Natural killer cell (primary cell): ENCODE measurements at regions of chr12 and their contacts with region 1.

Region 1: GRCh38 chr12:44875954-44876553 is at the start of gene NELL2:
- DNase-seq: peak in 1 of 2 donors; percentile 78
- ATAC-seq: peak; percentile 60 to 69 (median 67)
- H3K4me3 ChIP-seq: peak within 1 kb of the TSS; percentile 58
- H3K4me3 Mint-ChIP-seq: peak within 1 kb of the TSS; percentile 86
- H3K27ac ChIP-seq: no peak within 1 kb of the TSS
- H3K27ac Mint-ChIP-seq: peak within 1 kb of the TSS in 1 of 2 donors; percentile 30
- H3K4me1 ChIP-seq: peaks cover 21% of the 10 kb centered on the region
- H3K4me1 Mint-ChIP-seq: peaks cover 21 to 22% of the 10 kb centered on the region in 2 donors
- H3K27me3 ChIP-seq: peaks cover 50% of the 10 kb centered on the region
- H3K27me3 Mint-ChIP-seq: peaks cover 51 to 71% of the 10 kb centered on the region in 2 donors
- CTCF ChIP-seq: no peak
- total RNA-seq, gene NELL2: 5.8 to 15.3 (median 14.0) TPM

Region 2: GRCh38 chr12:44774815-44775411 is 101.1 kb before region 1 on chr12:
- intact Hi-C with region 1: loop called (anchors 5 kb)
- DNase-seq: peak; percentile 21 to 81
- ATAC-seq: no peak
- H3K4me3 ChIP-seq: no peak overlapping the region
- H3K4me3 Mint-ChIP-seq: no peak overlapping the region
- H3K27ac ChIP-seq: no peak overlapping the region
- H3K27ac Mint-ChIP-seq: no peak overlapping the region
- H3K4me1 ChIP-seq: no peaks in the 10 kb centered on the region
- H3K4me1 Mint-ChIP-seq: no peaks in the 10 kb centered on the region
- H3K27me3 ChIP-seq: no peaks in the 10 kb centered on the region
- H3K27me3 Mint-ChIP-seq: peaks cover 0 to 2% of the 10 kb centered on the region in 2 donors
- CTCF ChIP-seq: peak; percentile 84

Region 3: GRCh38 chr12:44812062-44812461 is 64.0 kb before region 1 on chr12:
- intact Hi-C with region 1: loop called (anchors 2 kb)
- DNase-seq: peak in 1 of 2 donors; percentile 84
- ATAC-seq: peak in 2 of 3 donors; percentile 55 to 67
- H3K4me3 ChIP-seq: no peak overlapping the region
- H3K4me3 Mint-ChIP-seq: no peak overlapping the region
- H3K27ac ChIP-seq: no peak overlapping the region
- H3K27ac Mint-ChIP-seq: no peak overlapping the region
- H3K4me1 ChIP-seq: no peaks in the 10 kb centered on the region
- H3K4me1 Mint-ChIP-seq: no peaks in the 10 kb centered on the region
- H3K27me3 ChIP-seq: no peaks in the 10 kb centered on the region
- H3K27me3 Mint-ChIP-seq: peaks cover 0 to 3% of the 10 kb centered on the region in 2 donors
- CTCF ChIP-seq: peak; percentile 23

Region 4: GRCh38 chr12:45309836-45310626 is 434.0 kb after region 1 on chr12:
- intact Hi-C with region 1: no loop called
- DNase-seq: no peak
- ATAC-seq: no peak
- H3K4me3 ChIP-seq: no peak overlapping the region
- H3K4me3 Mint-ChIP-seq: no peak overlapping the region
- H3K27ac ChIP-seq: no peak overlapping the region
- H3K27ac Mint-ChIP-seq: no peak overlapping the region
- H3K4me1 ChIP-seq: no peaks in the 10 kb centered on the region
- H3K4me1 Mint-ChIP-seq: peaks cover 5 to 10% of the 10 kb centered on the region in 2 donors
- H3K27me3 ChIP-seq: no peaks in the 10 kb centered on the region
- H3K27me3 Mint-ChIP-seq: no peaks in the 10 kb centered on the region
- CTCF ChIP-seq: no peak